ENCODE measurements at regions of chrX and their contacts with region 1.

Region 1: GRCh38 chrX:119791438-119792231 is at the start of gene RPL39:
- DNase-seq: peak; percentile 84
- H3K4me3 ChIP-seq: peak within 1 kb of the TSS; percentile 43 to 80 (median 69)
- H3K27ac ChIP-seq: peak within 1 kb of the TSS; percentile 78
- H3K4me1 ChIP-seq: peaks cover 8% of the 10 kb centered on the region
- H3K27me3 ChIP-seq: no peaks in the 10 kb centered on the region
- CTCF ChIP-seq: no peak
- total RNA-seq, gene RPL39: 1,137 to 1,408 TPM

Region 2: GRCh38 chrX:119667111-119667878 is 124.3 kb before region 1 on chrX:
- CTCF ChIA-PET with region 1: no interaction called
- dilution Hi-C with region 1: no loop called
- in situ Hi-C with region 1: no loop called
- intact Hi-C with region 1: no loop called
- DNase-seq: no peak
- H3K4me3 ChIP-seq: no peak overlapping the region
- H3K27ac ChIP-seq: no peak overlapping the region
- H3K4me1 ChIP-seq: peaks cover 6% of the 10 kb centered on the region
- H3K27me3 ChIP-seq: no peaks in the 10 kb centered on the region
- CTCF ChIP-seq: no peak

Region 3: DNA sequence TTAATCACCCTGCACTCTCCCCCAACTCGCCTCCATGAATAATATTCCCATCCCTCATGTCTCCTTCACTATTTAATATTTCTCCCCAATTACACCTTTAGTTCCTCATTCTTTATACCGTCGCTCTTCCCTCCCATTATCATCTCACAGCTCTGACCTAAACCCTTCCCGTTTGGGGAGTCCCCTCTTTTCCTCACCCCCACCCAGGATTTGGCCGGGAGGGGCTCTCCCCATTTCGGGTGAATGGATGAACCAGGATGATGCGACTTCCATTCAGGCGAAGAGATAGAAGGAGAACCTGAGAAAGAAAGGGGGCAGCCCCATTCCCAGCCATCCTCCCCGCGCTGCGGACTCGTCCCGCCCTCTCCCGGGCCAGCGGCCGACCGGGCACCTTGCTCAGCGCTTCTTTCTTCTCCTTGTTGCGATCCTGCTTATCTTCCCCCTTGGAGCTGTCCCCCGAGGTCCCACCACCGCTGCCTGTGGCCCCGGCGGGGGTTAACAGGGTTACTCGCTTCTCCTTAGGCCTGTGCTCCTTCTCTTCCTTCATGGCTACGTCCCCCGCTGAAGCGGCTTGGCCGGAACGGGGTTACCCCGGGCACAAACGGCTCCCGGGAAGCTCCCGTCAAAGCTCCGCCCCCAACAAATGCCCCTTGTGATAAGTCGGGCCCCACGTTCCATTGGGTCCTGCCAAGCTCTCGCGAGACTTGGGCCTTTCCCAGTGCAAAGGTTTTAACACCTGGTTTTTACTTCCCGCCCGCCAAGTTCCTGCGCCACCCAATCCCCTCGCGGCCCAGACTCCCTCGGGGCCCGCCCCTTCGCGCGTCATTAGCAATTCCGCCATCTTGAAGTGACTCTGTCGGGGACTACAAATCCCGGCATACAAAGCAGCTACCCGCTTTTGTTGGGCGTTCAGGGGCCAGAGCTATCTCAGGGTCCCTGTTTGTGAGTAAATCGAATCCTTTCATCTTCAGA is 61.0 kb after region 1 on chrX and contains the start of gene UPF3B:
- CTCF ChIA-PET with region 1: no interaction called
- dilution Hi-C with region 1: no loop called
- in situ Hi-C with region 1: no loop called
- intact Hi-C with region 1: loop called (anchors 1 kb)
- DNase-seq: peak; percentile 96
- H3K4me3 ChIP-seq: peak within 1 kb of the TSS; percentile 65 to 76 (median 71)
- H3K27ac ChIP-seq: peak within 1 kb of the TSS; percentile 51
- H3K4me1 ChIP-seq: no peaks in the 10 kb centered on the region
- H3K27me3 ChIP-seq: no peaks in the 10 kb centered on the region
- CTCF ChIP-seq: no peak
- total RNA-seq, gene UPF3B: 1.0 to 10.0 TPM

Region 4: GRCh38 chrX:119871599-119872395 is 80.2 kb after region 1 on chrX and contains the starts of genes NDUFA1 and RNF113A:
- CTCF ChIA-PET with region 1: no interaction called
- dilution Hi-C with region 1: no loop called
- in situ Hi-C with region 1: no loop called
- intact Hi-C with region 1: loop called (anchors 2 kb)
- DNase-seq: peak; percentile 84
- H3K4me3 ChIP-seq: peak within 1 kb of the TSS; percentile 49 to 74 (median 55)
- H3K27ac ChIP-seq: peak within 1 kb of the TSS; percentile 82
- H3K4me1 ChIP-seq: no peaks in the 10 kb centered on the region
- H3K27me3 ChIP-seq: no peaks in the 10 kb centered on the region
- CTCF ChIP-seq: no peak
- total RNA-seq, gene NDUFA1: 28.3 to 82.0 TPM
- total RNA-seq, gene RNF113A: 10.5 to 15.2 TPM

Region 5: DNA sequence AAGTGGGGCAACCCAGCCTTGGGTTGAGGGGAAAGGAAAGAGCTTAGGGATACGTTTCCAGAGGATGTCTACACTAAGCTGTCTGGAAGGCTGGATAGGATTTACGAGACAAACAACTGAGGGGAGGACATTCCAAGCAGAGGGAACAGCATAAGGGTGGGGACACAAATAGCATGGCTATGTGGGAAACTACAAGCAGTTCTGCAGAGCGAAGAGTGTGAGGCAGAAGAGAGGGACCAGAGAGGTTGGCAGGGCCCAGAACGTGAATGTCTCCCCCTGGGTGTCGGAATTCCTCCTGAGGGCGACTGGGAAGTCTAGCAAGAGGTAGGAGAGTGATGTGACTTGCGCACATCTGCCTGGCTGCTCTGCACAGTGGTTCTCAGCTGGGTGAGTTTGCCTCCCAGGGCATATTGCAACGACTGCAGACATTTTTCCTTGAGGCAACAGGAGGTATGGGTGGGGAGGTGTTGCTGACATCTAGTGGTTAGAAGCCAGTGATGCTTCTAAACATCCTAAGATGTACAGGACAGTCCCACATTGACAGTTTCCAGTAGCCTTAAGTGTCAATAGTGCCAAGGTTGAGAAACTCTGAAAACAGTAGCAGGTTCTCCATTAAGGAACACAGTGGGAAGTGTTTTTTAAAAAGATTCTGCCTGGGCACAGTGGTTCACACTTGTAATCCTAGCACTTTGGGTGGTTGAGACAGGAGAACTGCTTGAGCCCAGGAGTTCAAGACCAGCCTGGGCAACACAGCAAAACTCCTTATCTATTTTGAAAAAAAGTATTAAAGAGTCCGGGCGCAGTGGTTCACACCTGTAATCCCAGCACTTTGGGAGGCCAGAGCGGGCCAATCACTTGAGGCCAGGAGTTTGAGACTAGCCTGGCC is 89.2 kb after region 1 on chrX:
- CTCF ChIA-PET with region 1: no interaction called
- dilution Hi-C with region 1: no loop called
- in situ Hi-C with region 1: no loop called
- intact Hi-C with region 1: loop called (anchors 2 kb)
- DNase-seq: peak; percentile 29
- H3K4me3 ChIP-seq: no peak overlapping the region
- H3K27ac ChIP-seq: no peak overlapping the region
- H3K4me1 ChIP-seq: no peaks in the 10 kb centered on the region
- H3K27me3 ChIP-seq: no peaks in the 10 kb centered on the region
- CTCF ChIP-seq: peak; percentile 59 to 69

Region 6: GRCh38 chrX:119943185-119943988 is 151.8 kb after region 1 on chrX and contains the start of gene NKAP:
- CTCF ChIA-PET with region 1: no interaction called
- dilution Hi-C with region 1: no loop called
- in situ Hi-C with region 1: no loop called
- intact Hi-C with region 1: loop called (anchors 5 kb)
- DNase-seq: peak; percentile 87
- H3K4me3 ChIP-seq: peak within 1 kb of the TSS; percentile 57 to 69 (median 62)
- H3K27ac ChIP-seq: peak within 1 kb of the TSS; percentile 77
- H3K4me1 ChIP-seq: peaks cover 5% of the 10 kb centered on the region
- H3K27me3 ChIP-seq: no peaks in the 10 kb centered on the region
- CTCF ChIP-seq: no peak
- total RNA-seq, gene NKAP: 3.0 to 8.1 TPM